ENCODE measurements at regions of chr6 and their contacts with region 1.

Region 1: GRCh38 chr6:140623498-140623897 is 1249.0 kb upstream of the CITED2 start:
- DNase-seq: no peak
- H3K4me3 Mint-ChIP-seq: no peak overlapping the region
- H3K27ac Mint-ChIP-seq: no peak overlapping the region
- H3K4me1 Mint-ChIP-seq: no peaks in the 10 kb centered on the region
- H3K27me3 Mint-ChIP-seq: no peaks in the 10 kb centered on the region

Region 2: GRCh38 chr6:140597181-140597580 is 26.3 kb before region 1 on chr6:
- intact Hi-C with region 1: loop called (anchors 2 kb)
- DNase-seq: no peak
- H3K4me3 Mint-ChIP-seq: peak overlapping the region; percentile 48
- H3K27ac Mint-ChIP-seq: no peak overlapping the region
- H3K4me1 Mint-ChIP-seq: peaks cover 16% of the 10 kb centered on the region
- H3K27me3 Mint-ChIP-seq: no peaks in the 10 kb centered on the region